ENCODE measurements at regions of chr16 and their contacts with region 1.

Region 1: DNA sequence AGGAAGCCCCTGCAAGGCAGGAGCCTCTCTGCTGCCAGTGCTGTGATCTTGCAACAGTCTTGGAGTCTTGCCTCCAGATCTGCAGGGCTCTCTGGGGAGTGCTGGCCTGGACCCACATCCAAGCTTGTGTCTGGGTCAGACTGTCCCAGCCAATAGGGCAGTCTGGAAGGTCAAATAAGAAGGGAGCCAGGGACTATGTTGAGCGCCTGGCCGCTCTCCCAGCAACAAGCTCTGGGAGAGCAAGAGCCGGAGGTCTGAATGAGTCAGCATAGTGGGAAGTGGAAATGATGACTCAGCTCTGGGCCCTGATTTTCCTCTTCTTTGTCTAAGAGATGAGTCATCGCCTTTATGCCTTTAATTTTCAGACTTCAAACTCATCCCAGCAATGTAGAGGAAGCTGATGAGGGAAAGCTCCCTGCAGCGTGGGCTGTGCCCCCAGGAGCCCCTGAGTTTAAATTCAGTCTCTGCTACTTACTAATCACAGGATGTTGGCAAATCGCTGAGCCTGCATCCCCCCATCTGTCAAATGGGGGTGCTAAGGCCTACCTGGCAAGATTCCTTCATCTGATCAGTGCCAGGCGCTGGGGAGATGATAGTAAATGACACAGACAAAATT is 43.6 kb upstream of the HAPSTR1 start:
- DNase-seq: peak; percentile 98
- H3K4me3 ChIP-seq: no peak overlapping the region
- H3K27ac ChIP-seq: peak overlapping the region; percentile 94
- H3K4me1 ChIP-seq: peaks cover 15% of the 10 kb centered on the region
- H3K27me3 ChIP-seq: no peaks in the 10 kb centered on the region
- CTCF ChIP-seq: no peak
- POLR2A ChIP-seq: no peak

Region 2: DNA sequence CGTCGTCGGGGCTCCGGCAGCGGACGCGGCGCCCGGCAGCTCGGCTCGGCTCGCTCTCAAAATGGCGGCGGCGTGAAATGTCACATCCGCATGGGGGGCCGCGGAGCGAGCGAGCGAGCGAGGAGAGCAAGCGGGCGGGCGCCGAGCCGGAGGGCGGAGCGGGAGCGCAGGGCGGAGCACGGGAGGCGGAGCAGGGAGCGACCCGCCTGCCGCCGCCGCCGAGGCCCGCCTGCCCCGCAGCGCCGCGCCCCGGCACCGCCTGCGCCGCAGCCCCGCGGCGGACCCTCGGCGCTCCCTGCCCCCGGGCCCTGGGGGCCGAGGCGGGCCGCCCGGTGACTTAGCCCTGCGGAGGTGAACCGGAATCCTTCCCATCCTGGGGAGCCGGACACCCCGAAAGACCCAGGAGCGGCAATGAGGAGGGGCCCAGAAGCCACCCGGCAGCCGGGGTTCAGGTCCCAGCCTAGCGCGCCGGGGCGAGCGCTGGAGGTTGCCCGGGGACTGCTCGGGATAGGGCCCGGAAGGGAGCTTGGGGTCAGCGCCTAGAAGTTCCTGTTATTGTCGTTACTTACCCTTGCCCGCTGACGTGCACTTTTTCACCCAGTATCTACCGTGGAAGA is 83.9 kb before region 1 on chr16 and contains the start of gene USP7:
- CTCF ChIA-PET with region 1: no interaction called
- POLR2A ChIA-PET with region 1: no interaction called
- dilution Hi-C with region 1: no loop called
- intact Hi-C with region 1: loop called (anchors 5 kb)
- DNase-seq: peak; percentile 88
- H3K4me3 ChIP-seq: peak within 1 kb of the TSS; percentile 45 to 82 (median 64)
- H3K27ac ChIP-seq: peak within 1 kb of the TSS; percentile 51
- H3K4me1 ChIP-seq: peaks cover 34% of the 10 kb centered on the region
- H3K27me3 ChIP-seq: no peaks in the 10 kb centered on the region
- CTCF ChIP-seq: no peak
- POLR2A ChIP-seq: peak; percentile 68
- total RNA-seq, gene USP7: 130 and 138 TPM in 2 replicates

Region 3: GRCh38 chr16:9033125-9033830 is 14.5 kb before region 1 on chr16:
- CTCF ChIA-PET with region 1: interaction called, 32 read pairs
- POLR2A ChIA-PET with region 1: no interaction called
- dilution Hi-C with region 1: no loop called
- intact Hi-C with region 1: no loop called
- DNase-seq: peak; percentile 41
- H3K4me3 ChIP-seq: no peak overlapping the region
- H3K27ac ChIP-seq: no peak overlapping the region
- H3K4me1 ChIP-seq: no peaks in the 10 kb centered on the region
- H3K27me3 ChIP-seq: no peaks in the 10 kb centered on the region
- CTCF ChIP-seq: peak; percentile 26 to 70
- POLR2A ChIP-seq: no peak

Region 4: GRCh38 chr16:9079430-9079812 is 31.6 kb after region 1 on chr16:
- CTCF ChIA-PET with region 1: interaction called, 4 read pairs
- POLR2A ChIA-PET with region 1: interaction called, 3 read pairs
- dilution Hi-C with region 1: no loop called
- intact Hi-C with region 1: loop called (anchors 1 kb)
- DNase-seq: no peak
- H3K4me3 ChIP-seq: no peak overlapping the region
- H3K27ac ChIP-seq: peak overlapping the region; percentile 41
- H3K4me1 ChIP-seq: peaks cover 5% of the 10 kb centered on the region
- H3K27me3 ChIP-seq: no peaks in the 10 kb centered on the region
- CTCF ChIP-seq: no peak
- POLR2A ChIP-seq: no peak

Region 5: GRCh38 chr16:9311303-9311954 is 263.6 kb after region 1 on chr16:
- CTCF ChIA-PET with region 1: no interaction called
- POLR2A ChIA-PET with region 1: no interaction called
- dilution Hi-C with region 1: no loop called
- intact Hi-C with region 1: no loop called
- DNase-seq: no peak
- H3K4me3 ChIP-seq: no peak overlapping the region
- H3K27ac ChIP-seq: no peak overlapping the region
- H3K4me1 ChIP-seq: no peaks in the 10 kb centered on the region
- H3K27me3 ChIP-seq: no peaks in the 10 kb centered on the region
- CTCF ChIP-seq: no peak
- POLR2A ChIP-seq: no peak

Region 6: DNA sequence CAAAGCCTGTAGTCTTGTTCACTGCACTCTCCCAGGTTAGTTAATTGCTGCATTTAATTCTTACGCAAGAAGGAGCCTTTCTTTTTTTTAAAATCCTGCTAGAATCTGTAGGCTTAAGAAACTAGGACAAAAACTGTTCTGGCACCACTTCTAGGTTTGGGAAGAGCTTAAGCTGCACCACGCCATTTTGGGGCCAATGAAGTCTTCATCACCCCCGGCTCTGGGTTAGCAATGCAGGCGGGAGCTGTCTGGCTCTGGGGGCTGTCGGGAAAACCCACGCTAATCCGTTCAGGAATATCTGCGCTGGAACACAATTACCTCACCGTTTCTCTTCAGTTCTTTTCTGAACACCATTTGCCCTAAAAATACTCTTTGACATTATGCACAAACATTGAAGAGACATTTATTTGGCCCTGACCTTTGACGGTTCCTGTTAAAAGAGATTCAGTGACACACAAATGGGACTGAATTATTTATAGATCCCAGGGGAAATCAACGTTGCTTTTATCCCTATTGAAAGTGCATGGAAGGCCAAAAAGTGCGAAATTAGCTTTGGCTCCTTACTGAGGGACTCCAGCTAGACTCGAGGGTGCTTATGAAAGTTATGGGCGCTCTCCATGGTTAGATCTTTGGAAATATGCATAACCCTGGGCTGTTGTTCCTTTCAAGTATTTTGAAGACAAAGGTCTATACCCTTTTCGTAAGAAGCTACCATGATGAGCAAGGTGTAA is 292.9 kb after region 1 on chr16:
- CTCF ChIA-PET with region 1: no interaction called
- POLR2A ChIA-PET with region 1: no interaction called
- dilution Hi-C with region 1: no loop called
- intact Hi-C with region 1: no loop called
- DNase-seq: no peak
- H3K4me3 ChIP-seq: no peak overlapping the region
- H3K27ac ChIP-seq: no peak overlapping the region
- H3K4me1 ChIP-seq: no peaks in the 10 kb centered on the region
- H3K27me3 ChIP-seq: no peaks in the 10 kb centered on the region
- CTCF ChIP-seq: no peak
- POLR2A ChIP-seq: no peak

Measured in endothelial cell of umbilical vein (primary cell).